ENCODE measurements at regions of chr12 and their contacts with region 1.

Region 1: DNA sequence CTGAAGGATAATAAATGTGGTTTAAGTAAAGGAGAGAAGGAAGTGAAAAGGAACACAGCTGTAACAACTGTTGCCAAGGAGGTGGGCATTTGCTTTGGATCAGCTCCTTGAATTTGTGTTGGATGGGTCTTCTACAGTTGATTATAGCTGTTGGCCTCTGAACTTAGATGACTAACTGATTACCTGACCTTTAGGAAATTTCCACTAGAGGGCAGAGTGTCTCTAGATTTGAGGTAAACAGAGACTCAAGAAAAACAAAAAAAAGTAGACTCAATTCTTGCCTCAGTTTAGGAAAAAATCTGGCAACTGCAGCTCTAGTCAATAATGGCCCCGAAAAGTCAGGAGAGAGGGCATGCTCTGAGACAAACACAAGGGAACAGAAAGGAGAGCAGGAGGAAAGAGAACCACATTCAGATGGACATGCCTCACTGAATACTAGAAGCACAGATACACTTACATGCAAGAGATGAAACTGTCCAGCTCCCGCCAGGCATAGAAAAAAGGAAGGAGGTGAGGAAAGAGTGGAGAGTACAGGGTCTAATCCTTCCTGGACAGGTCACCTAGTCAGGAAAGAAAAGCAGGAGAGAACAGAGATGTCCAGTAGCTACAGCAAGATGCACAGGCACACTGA is 20.6 kb downstream of the COX14 start:
- DNase-seq: no peak
- H3K4me3 Mint-ChIP-seq: no peak overlapping the region
- H3K27ac Mint-ChIP-seq: peak overlapping the region; percentile 40
- H3K4me1 Mint-ChIP-seq: peaks cover 8% of the 10 kb centered on the region
- H3K27me3 Mint-ChIP-seq: no peaks in the 10 kb centered on the region

Region 2: DNA sequence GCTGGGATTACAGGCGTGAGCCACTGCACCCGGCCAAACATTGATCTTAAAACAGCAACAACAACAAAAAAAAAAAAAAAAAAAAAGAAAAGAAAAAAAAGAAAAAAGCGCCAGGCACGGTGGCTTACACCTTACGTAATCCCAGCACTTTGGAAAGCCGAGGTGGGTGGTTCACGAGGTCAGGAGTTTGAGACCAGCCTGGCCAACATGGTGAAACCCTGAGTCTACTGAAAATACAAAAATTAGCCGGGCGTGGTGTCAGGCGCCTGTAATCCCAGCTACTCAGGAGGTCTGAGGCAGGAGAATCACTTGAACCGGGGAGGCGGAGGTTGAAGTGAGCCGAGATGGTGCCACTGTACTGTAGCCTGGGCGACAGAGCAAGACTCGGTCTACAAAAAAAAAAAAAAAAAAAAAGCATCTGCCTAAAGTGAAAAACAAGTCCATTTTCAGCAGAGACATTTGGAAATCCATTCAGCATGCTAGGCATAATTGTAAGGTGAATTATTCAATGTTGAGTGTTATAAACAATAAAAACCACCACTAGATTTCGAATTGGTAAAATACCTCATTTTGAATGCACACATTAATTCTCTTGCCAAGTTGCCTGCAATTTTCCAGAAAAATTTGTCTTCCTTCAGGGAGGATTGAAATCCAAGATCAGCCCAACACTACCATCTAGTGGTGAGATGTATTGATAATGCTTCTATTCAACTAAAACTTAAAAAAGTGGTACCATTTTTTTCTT is 42.5 kb after region 1 on chr12:
- intact Hi-C with region 1: loop called (anchors 1 kb)
- DNase-seq: no peak
- H3K4me3 Mint-ChIP-seq: no peak overlapping the region
- H3K27ac Mint-ChIP-seq: no peak overlapping the region
- H3K4me1 Mint-ChIP-seq: peaks cover 1% of the 10 kb centered on the region
- H3K27me3 Mint-ChIP-seq: no peaks in the 10 kb centered on the region

Region 3: DNA sequence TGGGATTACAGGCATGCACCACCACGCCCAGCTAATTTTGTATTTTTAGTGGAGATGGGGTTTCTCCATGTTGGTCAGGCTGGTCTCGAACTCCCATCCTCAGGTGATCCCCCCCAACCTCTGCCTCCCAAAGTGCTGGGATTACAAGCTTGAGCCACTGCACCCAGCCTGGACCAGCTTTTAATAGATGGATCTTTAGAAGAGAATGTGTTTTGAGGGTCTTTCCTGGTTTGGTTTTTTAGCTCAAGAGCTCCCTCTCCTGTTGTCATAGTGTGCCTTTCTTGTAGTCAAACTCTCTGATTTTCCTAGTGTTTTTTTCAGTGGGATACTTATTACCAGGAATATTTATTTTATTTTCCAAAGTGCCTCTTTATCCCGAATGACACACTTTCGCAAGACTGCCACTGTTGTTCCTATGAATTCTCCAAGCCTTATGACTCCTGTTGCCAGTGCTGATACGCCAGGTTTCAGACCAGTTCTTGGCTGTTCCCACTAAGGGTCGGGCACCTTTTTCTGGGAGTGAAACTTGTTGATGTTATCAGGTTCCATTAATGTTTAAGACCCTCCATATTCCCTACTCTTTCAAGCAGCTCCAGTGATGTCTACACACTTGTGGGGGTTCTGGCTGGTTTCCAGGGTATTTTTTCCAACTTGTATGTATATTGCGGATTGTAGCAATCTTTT is 182.2 kb after region 1 on chr12:
- intact Hi-C with region 1: loop called (anchors 1 kb)
- DNase-seq: no peak
- H3K4me3 Mint-ChIP-seq: no peak overlapping the region
- H3K27ac Mint-ChIP-seq: no peak overlapping the region
- H3K4me1 Mint-ChIP-seq: no peaks in the 10 kb centered on the region
- H3K27me3 Mint-ChIP-seq: no peaks in the 10 kb centered on the region